ENCODE measurements at regions of chr17 and their contacts with region 1.

Region 1: DNA sequence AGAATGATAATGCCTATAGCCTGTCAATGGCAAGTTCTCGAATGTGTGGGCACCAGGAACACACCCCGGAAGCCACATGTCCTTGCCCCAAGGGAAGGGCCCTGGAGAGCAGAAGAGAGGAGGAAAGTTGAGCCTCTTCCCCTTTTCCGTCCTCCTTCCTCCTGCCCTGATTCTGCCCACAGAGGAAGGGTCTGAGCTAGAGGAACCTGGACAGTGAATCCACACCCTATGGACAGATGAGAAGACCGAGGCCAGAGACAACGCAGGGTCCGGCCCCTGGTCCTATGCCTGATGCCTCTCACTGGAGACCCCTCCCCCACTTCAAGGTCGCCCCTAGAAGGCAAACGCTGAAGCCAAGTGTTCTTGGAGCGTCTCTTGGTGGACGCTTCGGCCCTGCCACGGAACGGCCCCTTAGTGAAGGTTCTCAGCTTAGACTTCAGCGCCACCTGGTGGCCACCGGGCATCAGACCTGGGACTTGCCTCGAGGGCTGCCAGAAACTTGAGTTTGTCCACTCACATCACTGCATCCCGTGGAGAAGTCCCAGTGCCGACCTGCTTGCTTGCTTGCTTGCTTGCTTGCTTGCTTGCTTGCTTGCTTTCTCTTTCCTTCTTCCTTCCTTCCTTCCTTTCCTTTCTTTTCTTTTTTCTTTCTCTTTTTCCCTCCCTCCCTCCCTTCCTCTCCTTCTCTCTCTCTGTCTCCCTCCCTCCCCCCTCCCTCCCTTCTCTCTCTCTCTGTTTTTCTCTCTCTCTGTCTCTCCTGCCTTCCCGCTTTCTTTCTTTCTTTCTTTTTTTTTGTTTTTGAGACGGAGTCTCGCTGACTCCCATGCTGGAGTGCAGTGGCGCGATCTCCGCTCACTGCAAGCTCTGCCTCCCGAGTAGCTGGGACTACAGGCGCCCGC is 20.6 kb upstream of the SPNS3 start:
- DNase-seq: peak; percentile 95
- ATAC-seq: peak; percentile 99
- H3K4me3 Mint-ChIP-seq: peak overlapping the region; percentile 12
- H3K27ac Mint-ChIP-seq: peak overlapping the region; percentile 59
- H3K4me1 Mint-ChIP-seq: peaks cover 5% of the 10 kb centered on the region
- H3K27me3 Mint-ChIP-seq: no peaks in the 10 kb centered on the region
- CTCF ChIP-seq: peak; percentile 67

Region 2: DNA sequence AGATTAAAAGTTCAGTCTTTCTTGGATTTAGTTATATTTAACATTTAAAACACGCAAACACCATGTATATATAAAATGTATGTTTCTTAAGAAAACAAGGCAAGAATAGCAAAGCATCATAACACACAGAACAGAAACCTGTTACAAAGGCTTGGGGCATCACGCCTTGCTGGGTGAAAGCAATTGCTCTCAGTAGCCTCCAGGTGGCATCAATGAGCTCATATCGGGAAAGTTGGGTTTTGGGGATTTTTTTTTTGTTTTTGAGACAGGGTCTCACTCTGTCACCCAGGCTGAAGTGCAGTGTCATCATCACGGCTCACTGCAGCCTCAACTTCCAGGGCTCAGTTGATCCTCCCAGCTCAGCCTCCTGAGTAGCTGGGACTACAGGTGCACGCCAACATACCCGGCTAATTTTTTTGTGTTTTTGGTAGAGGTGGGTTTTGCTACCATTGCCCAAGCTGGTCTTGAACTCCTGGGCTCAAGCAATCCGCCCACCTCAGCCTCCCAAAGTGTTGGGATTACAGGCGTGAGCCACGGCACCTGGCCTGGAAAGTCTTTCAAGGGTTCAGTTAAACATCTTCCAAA is 213.3 kb before region 1 on chr17:
- CTCF ChIA-PET with region 1: interaction called, 28 read pairs
- POLR2A ChIA-PET with region 1: no interaction called
- intact Hi-C with region 1: loop called (anchors 5 kb)
- DNase-seq: peak; percentile 48
- ATAC-seq: peak; percentile 69
- H3K4me3 Mint-ChIP-seq: no peak overlapping the region
- H3K27ac Mint-ChIP-seq: no peak overlapping the region
- H3K4me1 Mint-ChIP-seq: peaks cover 10% of the 10 kb centered on the region
- H3K27me3 Mint-ChIP-seq: no peaks in the 10 kb centered on the region
- CTCF ChIP-seq: peak; percentile 84

Region 3: DNA sequence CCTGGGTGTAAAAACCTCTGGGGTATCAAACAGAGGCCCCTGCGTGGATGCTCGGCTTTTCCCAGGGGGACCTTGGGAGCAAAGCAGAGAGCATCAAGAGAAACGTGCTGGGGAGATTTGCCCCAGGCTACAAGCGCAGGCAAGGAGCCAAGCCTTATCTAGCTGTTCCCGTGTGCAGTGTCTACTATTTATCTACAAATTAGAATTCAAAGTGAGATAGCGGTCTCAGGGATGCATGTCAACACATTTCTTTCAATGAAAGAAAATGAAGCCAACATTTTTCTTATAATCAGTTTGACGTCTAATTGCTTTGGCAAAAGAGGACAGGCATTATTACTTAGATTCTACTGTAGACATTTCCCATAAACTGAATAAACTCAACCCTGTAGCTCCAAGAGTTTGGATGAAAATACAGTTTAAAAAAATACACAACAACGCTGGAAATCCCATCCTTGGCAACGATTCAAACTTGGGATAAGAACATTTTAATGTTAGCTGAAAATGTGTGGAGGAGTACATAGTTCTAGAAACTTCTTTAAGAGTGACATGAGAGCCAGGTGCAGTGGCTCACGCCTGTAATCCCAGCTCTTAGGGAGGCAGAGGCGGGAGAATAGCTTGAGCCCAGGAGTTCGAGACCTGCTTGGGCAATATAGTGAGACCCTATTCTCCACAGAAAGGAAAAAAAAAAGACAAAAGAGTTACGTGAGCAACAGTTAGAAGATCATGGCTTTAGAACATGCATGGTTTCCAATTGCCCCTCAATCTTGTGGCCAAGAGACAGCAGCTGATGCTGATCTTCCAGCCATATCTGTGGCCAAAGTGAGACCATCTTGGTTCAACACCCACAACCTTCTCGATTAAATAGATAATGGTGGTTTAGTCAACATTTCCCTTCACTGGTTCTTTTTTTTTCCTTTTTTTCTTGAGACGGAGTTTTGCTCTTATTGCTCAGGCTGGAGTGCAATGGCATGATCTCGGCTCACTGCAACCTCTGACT is 27.8 kb after region 1 on chr17:
- CTCF ChIA-PET with region 1: no interaction called
- POLR2A ChIA-PET with region 1: no interaction called
- intact Hi-C with region 1: no loop called
- DNase-seq: no peak
- ATAC-seq: no peak
- H3K4me3 Mint-ChIP-seq: no peak overlapping the region
- H3K27ac Mint-ChIP-seq: no peak overlapping the region
- H3K4me1 Mint-ChIP-seq: peaks cover 14% of the 10 kb centered on the region
- H3K27me3 Mint-ChIP-seq: no peaks in the 10 kb centered on the region
- CTCF ChIP-seq: no peak

Region 4: GRCh38 chr17:4476511-4477070 is 63.4 kb after region 1 on chr17:
- CTCF ChIA-PET with region 1: no interaction called
- POLR2A ChIA-PET with region 1: no interaction called
- intact Hi-C with region 1: no loop called
- DNase-seq: no peak
- ATAC-seq: no peak
- H3K4me3 Mint-ChIP-seq: no peak overlapping the region
- H3K27ac Mint-ChIP-seq: no peak overlapping the region
- H3K4me1 Mint-ChIP-seq: peaks cover 24% of the 10 kb centered on the region
- H3K27me3 Mint-ChIP-seq: no peaks in the 10 kb centered on the region
- CTCF ChIP-seq: no peak

Measured in activated CD8-positive, alpha-beta T cell treated with anti-CD3 and anti-CD28 coated beads for 36 hours (primary cell).